ENCODE measurements at regions of chr5 and their contacts with region 1.

Region 1: GRCh38 chr5:96344678-96345577 is 88.1 kb downstream of the PCSK1 start:
- DNase-seq: peak; percentile 54
- ATAC-seq: peak; percentile 94
- H3K4me3 ChIP-seq: no peak overlapping the region
- H3K27ac ChIP-seq: no peak overlapping the region
- H3K4me1 ChIP-seq: no peaks in the 10 kb centered on the region
- H3K27me3 ChIP-seq: no peaks in the 10 kb centered on the region
- CTCF ChIP-seq: peak; percentile 47 to 80 (median 67)
- POLR2A ChIP-seq: no peak
- RAD21 ChIP-seq: peak; percentile 91

Region 2: GRCh38 chr5:95973793-95974325 is 371.1 kb before region 1 on chr5:
- CTCF ChIA-PET with region 1: no interaction called
- POLR2A ChIA-PET with region 1: no interaction called
- RAD21 ChIA-PET with region 1: no interaction called
- intact Hi-C with region 1: no loop called
- DNase-seq: no peak
- ATAC-seq: no peak
- H3K4me3 ChIP-seq: no peak overlapping the region
- H3K27ac ChIP-seq: no peak overlapping the region
- H3K4me1 ChIP-seq: no peaks in the 10 kb centered on the region
- H3K27me3 ChIP-seq: no peaks in the 10 kb centered on the region
- CTCF ChIP-seq: no peak
- POLR2A ChIP-seq: no peak
- RAD21 ChIP-seq: no peak

Region 3: DNA sequence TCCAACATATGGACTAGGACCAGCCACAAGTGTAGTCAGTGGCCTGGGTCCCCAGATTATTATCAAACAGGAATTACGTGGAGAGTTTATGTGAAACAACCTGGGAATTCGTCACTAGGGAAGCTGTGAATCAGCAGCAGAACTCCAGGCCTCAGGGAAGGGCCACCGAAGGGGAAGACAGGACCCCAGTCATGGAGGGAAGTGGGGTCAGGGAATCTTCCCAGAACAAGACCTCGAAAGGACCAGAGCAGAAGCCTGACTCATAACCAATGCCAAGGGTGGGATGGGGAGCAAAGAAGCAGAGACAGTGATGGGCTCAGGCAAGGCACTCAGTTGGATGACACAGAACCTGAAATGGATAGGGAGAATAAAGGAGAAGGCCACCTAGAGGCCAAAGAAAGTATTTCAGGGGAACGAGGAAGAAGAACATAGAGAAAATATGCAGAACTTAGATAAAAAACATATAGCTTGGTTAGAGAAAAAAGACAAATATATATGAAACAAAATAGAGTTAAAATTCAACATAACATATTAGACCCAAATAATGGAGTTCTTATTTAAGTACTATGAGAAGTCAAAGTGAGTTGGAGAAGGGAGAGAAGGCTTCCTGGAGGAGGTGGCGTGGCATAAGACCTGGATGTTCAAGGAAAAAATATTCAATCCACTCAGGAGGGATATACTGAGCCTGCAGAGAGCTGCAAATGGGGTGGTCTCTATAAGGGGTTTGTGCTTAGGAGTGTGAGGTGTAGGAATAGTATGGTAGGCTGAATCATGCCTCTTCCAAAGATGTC is 250.6 kb after region 1 on chr5:
- CTCF ChIA-PET with region 1: interaction called, 83 read pairs
- POLR2A ChIA-PET with region 1: no interaction called
- RAD21 ChIA-PET with region 1: interaction called in 1 of 2 experiments, 3 read pairs
- intact Hi-C with region 1: no loop called
- DNase-seq: no peak
- ATAC-seq: peak; percentile 78
- H3K4me3 ChIP-seq: no peak overlapping the region
- H3K27ac ChIP-seq: no peak overlapping the region
- H3K4me1 ChIP-seq: no peaks in the 10 kb centered on the region
- H3K27me3 ChIP-seq: 0 out of 2 replicates have a peak, but pooled peaks cover 4% of the 10 kb centered on the region
- CTCF ChIP-seq: peak; percentile 29 to 77 (median 57); a peak in 4 of 6 replicates
- POLR2A ChIP-seq: no peak
- RAD21 ChIP-seq: peak; percentile 34; the same call in 1 of the 2 replicates

Region 4: DNA sequence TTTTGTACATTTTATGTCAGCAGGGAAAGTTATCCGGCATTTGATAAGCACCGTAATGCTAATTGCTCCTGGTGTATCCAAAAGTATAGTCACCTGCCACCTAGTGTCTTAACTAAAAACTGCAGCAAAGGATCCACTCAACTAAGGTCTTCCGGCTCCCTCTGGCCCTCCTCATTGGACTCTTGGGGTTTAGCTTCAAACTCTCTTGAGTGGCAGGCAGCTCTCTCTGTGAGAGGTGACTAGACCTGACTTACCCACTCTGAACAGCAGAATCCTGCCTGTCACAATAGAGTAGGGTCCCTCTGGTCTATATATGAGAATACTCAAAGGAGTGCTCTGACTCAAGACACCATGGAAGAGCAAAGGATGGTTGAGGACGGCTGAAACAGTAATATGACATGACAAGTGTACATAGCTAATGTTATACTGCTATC is 256.9 kb after region 1 on chr5:
- CTCF ChIA-PET with region 1: interaction called, 83 read pairs
- POLR2A ChIA-PET with region 1: no interaction called
- RAD21 ChIA-PET with region 1: interaction called, 3 to 4 read pairs
- intact Hi-C with region 1: loop called (anchors 1 kb)
- DNase-seq: peak; percentile 53
- ATAC-seq: peak; percentile 97
- H3K4me3 ChIP-seq: no peak overlapping the region
- H3K27ac ChIP-seq: no peak overlapping the region
- H3K4me1 ChIP-seq: no peaks in the 10 kb centered on the region
- H3K27me3 ChIP-seq: 0 out of 2 replicates have a peak, but pooled peaks cover 4% of the 10 kb centered on the region
- CTCF ChIP-seq: peak; percentile 71 to 86 (median 75)
- POLR2A ChIP-seq: no peak
- RAD21 ChIP-seq: peak; percentile 74

Region 5: DNA sequence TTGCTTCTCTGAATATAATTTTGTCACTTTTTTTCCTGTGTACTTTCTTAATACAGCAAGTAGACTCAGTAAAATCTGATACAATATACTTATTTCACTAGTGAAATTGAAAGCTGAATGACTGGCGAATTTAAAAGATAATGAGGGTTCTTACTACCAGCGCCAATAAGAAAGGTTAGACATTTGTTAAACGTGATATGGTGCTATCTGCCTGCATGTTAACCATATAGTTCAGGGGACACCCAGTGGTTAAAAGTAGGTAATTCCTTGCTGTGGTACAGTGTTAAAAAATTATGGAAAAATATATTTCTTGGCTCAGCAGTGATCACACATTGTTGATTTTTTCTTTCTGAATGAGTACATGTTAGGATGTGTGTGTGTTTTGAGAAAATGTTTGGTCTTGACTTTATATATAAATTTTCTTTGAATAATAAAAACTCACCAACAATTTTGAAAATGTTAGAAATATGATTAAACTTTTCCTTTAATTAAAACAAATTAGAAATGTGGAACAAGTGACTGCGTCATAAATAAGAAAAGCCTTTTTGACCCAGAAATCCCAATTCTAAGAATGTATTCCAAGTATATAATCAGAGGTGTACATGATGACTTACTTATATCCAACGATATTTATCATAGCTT is 343.0 kb after region 1 on chr5:
- CTCF ChIA-PET with region 1: no interaction called
- POLR2A ChIA-PET with region 1: no interaction called
- RAD21 ChIA-PET with region 1: no interaction called
- intact Hi-C with region 1: loop called (anchors 5 kb)
- DNase-seq: peak; percentile 39
- ATAC-seq: peak; percentile 93
- H3K4me3 ChIP-seq: 0 out of 4 replicates have a peak overlapping the region, but pooled peaks of 1 of the 2 experiments have one; percentile 9
- H3K27ac ChIP-seq: no peak overlapping the region
- H3K4me1 ChIP-seq: peaks cover 0 to 3% of the 10 kb centered on the region in 2 experiments; a peak in 1 of 4 replicates
- H3K27me3 ChIP-seq: no peaks in the 10 kb centered on the region
- CTCF ChIP-seq: peak; percentile 53 to 74 (median 71); a peak in 5 of 6 replicates
- POLR2A ChIP-seq: no peak
- RAD21 ChIP-seq: peak; percentile 90

Region 6: DNA sequence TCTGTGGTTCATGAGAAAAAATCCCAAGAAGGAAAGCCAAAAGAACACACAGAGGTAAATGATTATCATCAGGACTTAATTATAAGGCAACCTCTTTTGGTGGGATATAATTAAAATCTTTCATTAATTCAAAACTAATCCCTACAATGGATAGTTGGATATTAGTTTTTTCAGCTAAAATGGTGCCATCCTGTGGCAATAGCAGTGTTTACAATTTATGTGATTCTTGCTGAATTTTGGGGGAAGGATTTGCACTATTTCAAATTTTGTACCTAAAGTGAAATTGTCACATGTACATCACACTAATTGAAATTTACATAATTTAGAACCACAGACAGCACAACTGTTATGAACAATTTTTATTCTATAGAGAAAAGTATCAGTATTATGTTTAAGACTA is 384.2 kb after region 1 on chr5:
- CTCF ChIA-PET with region 1: interaction called, 3 read pairs
- POLR2A ChIA-PET with region 1: no interaction called
- RAD21 ChIA-PET with region 1: no interaction called
- intact Hi-C with region 1: loop called (anchors 10 kb)
- DNase-seq: no peak
- ATAC-seq: no peak
- H3K4me3 ChIP-seq: no peak overlapping the region
- H3K27ac ChIP-seq: no peak overlapping the region
- H3K4me1 ChIP-seq: peaks cover 5 to 13% of the 10 kb centered on the region in 2 experiments; a peak in 3 of 4 replicates
- H3K27me3 ChIP-seq: no peaks in the 10 kb centered on the region
- CTCF ChIP-seq: peak; percentile 17 to 47 (median 28); a peak in 4 of 6 replicates
- POLR2A ChIP-seq: no peak
- RAD21 ChIP-seq: peak; percentile 56

Region 7: DNA sequence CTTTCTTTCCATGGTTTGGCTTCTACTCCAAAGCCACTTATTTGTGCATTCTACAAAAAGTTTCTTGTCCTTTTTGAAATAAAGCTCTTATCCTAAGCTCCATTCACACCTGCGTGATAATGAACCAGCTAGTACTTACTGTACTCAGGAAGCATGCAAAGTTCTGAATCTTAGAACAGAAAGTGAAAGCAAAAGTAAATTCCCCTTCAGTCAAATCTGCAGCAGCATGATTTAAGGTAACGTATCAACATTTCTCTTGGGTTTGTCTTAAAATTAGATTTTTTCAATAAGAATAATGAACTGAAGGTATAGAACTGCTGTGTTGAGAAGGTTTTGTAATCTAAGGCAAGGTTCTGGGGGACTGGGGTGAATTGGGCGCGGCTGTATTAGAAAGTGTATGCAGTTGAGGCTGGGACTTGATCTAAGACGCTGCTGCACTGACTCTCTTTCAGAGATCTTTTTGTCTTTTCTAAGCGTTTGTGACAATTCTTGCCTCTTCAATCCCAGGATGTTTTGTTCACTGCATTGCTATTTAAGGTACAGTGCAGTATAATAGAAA is 531.4 kb after region 1 on chr5 and contains the start of gene ERAP2:
- CTCF ChIA-PET with region 1: no interaction called
- POLR2A ChIA-PET with region 1: no interaction called
- RAD21 ChIA-PET with region 1: no interaction called
- intact Hi-C with region 1: loop called (anchors 5 kb)
- DNase-seq: no peak
- ATAC-seq: peak; percentile 68
- H3K4me3 ChIP-seq: peak within 1 kb of the TSS; percentile 63 to 67
- H3K27ac ChIP-seq: peak within 1 kb of the TSS; percentile 59
- H3K4me1 ChIP-seq: peaks cover 0 to 29% of the 10 kb centered on the region in 2 experiments; a peak in 2 of 4 replicates
- H3K27me3 ChIP-seq: no peaks in the 10 kb centered on the region
- CTCF ChIP-seq: no peak
- POLR2A ChIP-seq: no peak
- RAD21 ChIP-seq: no peak
- total RNA-seq, gene ERAP2: 2.2 TPM

Region 8: GRCh38 chr5:97162045-97162444 is 817.1 kb after region 1 on chr5:
- CTCF ChIA-PET with region 1: interaction called, 7 read pairs
- POLR2A ChIA-PET with region 1: no interaction called
- RAD21 ChIA-PET with region 1: no interaction called
- intact Hi-C with region 1: loop called (anchors 5 kb)
- DNase-seq: peak; percentile 79
- ATAC-seq: peak; percentile 77
- H3K4me3 ChIP-seq: no peak overlapping the region
- H3K27ac ChIP-seq: no peak overlapping the region
- H3K4me1 ChIP-seq: peaks cover 7 to 9% of the 10 kb centered on the region in 2 experiments; a peak in 3 of 4 replicates
- H3K27me3 ChIP-seq: no peaks in the 10 kb centered on the region
- CTCF ChIP-seq: peak; percentile 67 to 95 (median 81)
- POLR2A ChIP-seq: no peak
- RAD21 ChIP-seq: peak; percentile 85

Measured in HCT116 (cell line).